ENCODE measurements at regions of chr1 and their contacts with region 1.

Region 1: DNA sequence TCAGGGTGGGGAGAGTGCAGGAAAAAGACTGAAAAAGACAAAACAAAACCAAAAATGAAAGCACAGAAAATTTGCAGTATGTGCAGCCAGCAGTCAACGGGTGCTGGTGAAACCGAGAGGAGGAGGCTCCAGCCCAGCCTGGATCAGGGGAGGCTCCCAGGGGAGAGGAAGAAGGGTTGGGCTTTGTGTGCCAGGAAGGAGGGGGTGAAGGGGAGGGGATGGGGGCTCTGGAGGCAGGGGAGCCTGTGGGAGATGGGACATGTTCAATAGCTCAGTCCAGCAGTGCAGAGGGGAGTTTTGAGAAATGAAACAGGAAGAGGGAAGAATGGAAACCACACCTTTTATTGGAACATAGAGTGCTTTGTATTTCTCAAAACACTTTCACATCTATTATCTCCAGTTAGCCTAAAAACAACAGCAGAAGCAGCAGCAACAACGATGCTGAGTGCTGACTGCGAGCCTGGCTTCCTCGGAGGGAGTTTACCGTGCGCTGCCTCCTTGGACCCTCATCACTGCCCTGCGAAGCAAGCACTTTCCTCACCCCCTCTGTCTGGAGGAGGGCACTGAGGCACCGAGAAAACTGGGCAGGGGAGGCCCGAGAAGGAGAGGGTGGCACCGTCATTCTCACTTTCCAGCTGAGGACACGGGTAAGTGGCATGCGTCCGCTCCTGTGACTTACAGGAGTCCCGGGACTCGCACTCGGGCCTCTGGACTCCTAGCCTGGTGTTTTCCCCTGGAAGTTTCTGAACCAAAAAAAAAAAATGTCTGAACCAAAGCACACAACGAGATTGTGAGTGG is 62.9 kb downstream of the MDM4 start:
- DNase-seq: no peak
- H3K4me3 ChIP-seq: peak overlapping the region in 3 of 4 donors; percentile 11 to 55 (median 21)
- H3K27ac ChIP-seq: peak overlapping the region; percentile 21 to 56 (median 38)
- H3K4me1 ChIP-seq: peaks cover 0 to 40% (median 6%) of the 10 kb centered on the region in 3 donors
- H3K27me3 ChIP-seq: no peaks in the 10 kb centered on the region
- CTCF ChIP-seq: no peak
- POLR2A ChIP-seq: no peak

Region 2: DNA sequence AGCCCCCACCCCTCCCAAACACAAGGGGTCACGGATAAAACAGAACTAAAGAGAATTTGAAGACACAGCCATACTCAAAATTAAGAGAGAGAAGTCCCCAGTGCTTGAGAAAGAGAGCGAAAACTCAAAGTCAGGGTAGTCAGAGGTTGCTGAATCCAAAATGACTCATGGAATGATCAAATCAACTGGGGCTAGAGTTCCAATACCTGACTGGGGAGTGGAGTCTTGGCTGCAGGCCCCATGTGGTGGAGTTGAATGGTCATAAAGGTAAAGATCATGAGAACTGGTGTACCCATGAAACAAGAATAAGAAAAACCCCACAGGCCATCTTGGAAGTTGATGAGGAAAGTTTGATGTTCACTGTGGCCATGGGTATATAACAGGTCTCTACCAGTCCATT is 190.9 kb after region 1 on chr1:
- intact Hi-C with region 1: loop called (anchors 10 kb)
- DNase-seq: no peak
- H3K4me3 ChIP-seq: no peak overlapping the region
- H3K27ac ChIP-seq: no peak overlapping the region
- H3K4me1 ChIP-seq: no peaks in the 10 kb centered on the region
- H3K27me3 ChIP-seq: peaks cover 0 to 91% (median 0%) of the 10 kb centered on the region in 4 donors
- CTCF ChIP-seq: no peak
- POLR2A ChIP-seq: no peak